ENCODE measurements at regions of chr11 and their contacts with region 1.

Region 1: GRCh38 chr11:94117871-94118270 is 10.8 kb upstream of the PANX1 start:
- DNase-seq: no peak

Region 2: GRCh38 chr11:94107363-94107762 is 10.5 kb before region 1 on chr11:
- intact Hi-C with region 1: no loop called
- DNase-seq: no peak

Region 3: DNA sequence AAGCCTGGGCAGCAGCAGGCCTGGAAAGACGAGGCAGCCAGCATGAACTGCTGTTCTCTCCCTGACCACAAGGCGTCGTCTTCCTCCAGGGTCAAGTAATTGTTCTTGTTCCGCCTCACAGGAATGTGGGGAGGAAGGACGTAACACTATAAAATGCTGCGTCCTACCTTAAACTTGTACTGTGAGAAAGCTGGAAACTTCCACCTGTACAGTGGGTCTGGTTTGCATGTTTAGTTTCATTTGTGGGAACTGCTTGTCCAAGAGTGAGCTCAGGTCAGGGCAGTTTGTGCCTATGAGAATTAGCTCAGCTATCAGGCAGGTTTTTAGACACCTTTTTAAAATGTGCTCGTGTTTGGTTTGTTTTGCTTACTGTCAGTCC is 66.0 kb after region 1 on chr11:
- intact Hi-C with region 1: loop called in 1 of 2 experiments (anchors 10 kb)
- DNase-seq: peak; percentile 82

Measured in posterior vena cava (tissue), 2 donors.